H1 (cell line): ENCODE measurements at regions of chr14 and their contacts with region 1.

Region 1: GRCh38 chr14:93906341-93907329 is 20.5 kb upstream of the FAM181A start:
- DNase-seq: peak; percentile 47 to 87
- H3K4me3 ChIP-seq: no peak overlapping the region
- H3K27ac ChIP-seq: no peak overlapping the region
- H3K4me1 ChIP-seq: peaks cover 0 to 7% (median 3%) of the 10 kb centered on the region in 4 experiments; a peak in 4 of 7 replicates
- H3K27me3 ChIP-seq: no peaks in the 10 kb centered on the region; a peak in 1 of 7 replicates
- CTCF ChIP-seq: peak; percentile 75 to 93 (median 91)
- EP300 ChIP-seq: no peak
- POLR2A ChIP-seq: no peak
- RAD21 ChIP-seq: peak; percentile 90

Region 2: GRCh38 chr14:93648440-93649168 is 258.0 kb before region 1 on chr14:
- CTCF ChIA-PET with region 1: interaction called, 149 read pairs
- POLR2A ChIA-PET with region 1: no interaction called
- DNase-seq: no peak
- H3K4me3 ChIP-seq: no peak overlapping the region
- H3K27ac ChIP-seq: no peak overlapping the region
- H3K4me1 ChIP-seq: no peaks in the 10 kb centered on the region
- H3K27me3 ChIP-seq: no peaks in the 10 kb centered on the region
- CTCF ChIP-seq: peak; percentile 73 to 87 (median 80)
- EP300 ChIP-seq: no peak
- POLR2A ChIP-seq: no peak
- RAD21 ChIP-seq: peak; percentile 90 to 91

Region 3: DNA sequence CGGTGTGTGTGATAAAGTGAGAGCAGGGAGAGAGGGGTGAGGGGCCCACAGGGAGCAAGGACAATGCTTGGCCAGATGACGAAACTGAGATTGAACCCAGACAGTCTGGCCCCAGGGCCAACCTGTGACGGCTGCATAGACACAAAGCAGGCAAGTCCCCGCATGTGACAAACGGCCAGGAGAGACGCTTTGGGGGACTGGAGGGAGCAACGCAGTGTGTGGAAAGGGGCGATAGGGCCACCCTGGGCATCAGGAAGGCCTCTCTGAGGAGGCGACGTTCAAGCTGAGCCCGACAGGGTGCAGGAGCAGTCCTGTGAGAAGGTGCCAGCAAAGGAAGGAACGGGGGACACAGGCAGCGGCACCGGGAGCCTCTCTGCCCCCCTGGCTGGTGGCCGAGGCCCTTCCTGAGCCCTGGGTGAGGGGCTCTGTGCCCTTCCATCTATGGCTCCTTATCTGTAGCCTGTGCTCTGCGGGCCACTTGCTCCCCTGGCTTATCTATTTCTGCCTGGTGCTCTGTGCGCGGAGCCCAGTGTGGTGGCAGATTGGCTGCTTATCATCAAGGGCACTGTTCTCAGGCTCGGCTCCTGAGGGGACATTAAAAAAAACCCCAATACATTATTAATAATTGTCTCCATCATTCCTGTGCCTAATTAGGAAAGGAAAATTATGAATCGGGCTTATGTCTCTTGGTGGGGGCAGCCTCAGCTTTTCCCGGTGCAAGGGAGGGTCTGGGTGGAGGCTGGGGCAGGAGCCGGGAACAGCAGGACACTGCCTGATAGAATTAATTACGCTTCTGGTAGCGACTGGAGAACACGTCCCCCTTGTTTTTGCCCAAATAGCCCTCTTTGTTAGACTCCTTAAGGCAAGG is 158.2 kb before region 1 on chr14:
- CTCF ChIA-PET with region 1: no interaction called
- POLR2A ChIA-PET with region 1: no interaction called
- DNase-seq: no peak
- H3K4me3 ChIP-seq: no peak overlapping the region
- H3K27ac ChIP-seq: no peak overlapping the region
- H3K4me1 ChIP-seq: peaks cover 0 to 18% (median 6%) of the 10 kb centered on the region in 4 experiments; a peak in 4 of 7 replicates
- H3K27me3 ChIP-seq: no peaks in the 10 kb centered on the region
- CTCF ChIP-seq: no peak
- EP300 ChIP-seq: no peak
- POLR2A ChIP-seq: no peak
- RAD21 ChIP-seq: no peak

Region 4: GRCh38 chr14:93804646-93805045 is 102.0 kb before region 1 on chr14:
- CTCF ChIA-PET with region 1: interaction called, 35 read pairs
- POLR2A ChIA-PET with region 1: no interaction called
- DNase-seq: peak in 1 of 2 experiments; percentile 91
- H3K4me3 ChIP-seq: no peak overlapping the region
- H3K27ac ChIP-seq: no peak overlapping the region
- H3K4me1 ChIP-seq: no peaks in the 10 kb centered on the region
- H3K27me3 ChIP-seq: no peaks in the 10 kb centered on the region; a peak in 1 of 7 replicates
- CTCF ChIP-seq: peak; percentile 79 to 93 (median 92)
- EP300 ChIP-seq: no peak
- POLR2A ChIP-seq: no peak
- RAD21 ChIP-seq: peak; percentile 71 to 78

Region 5: GRCh38 chr14:93821051-93821450 is 85.6 kb before region 1 on chr14:
- CTCF ChIA-PET with region 1: interaction called, 13 read pairs
- POLR2A ChIA-PET with region 1: no interaction called
- DNase-seq: no peak
- H3K4me3 ChIP-seq: no peak overlapping the region
- H3K27ac ChIP-seq: no peak overlapping the region
- H3K4me1 ChIP-seq: no peaks in the 10 kb centered on the region
- H3K27me3 ChIP-seq: no peaks in the 10 kb centered on the region
- CTCF ChIP-seq: no peak
- EP300 ChIP-seq: no peak
- POLR2A ChIP-seq: no peak
- RAD21 ChIP-seq: no peak

Region 6: DNA sequence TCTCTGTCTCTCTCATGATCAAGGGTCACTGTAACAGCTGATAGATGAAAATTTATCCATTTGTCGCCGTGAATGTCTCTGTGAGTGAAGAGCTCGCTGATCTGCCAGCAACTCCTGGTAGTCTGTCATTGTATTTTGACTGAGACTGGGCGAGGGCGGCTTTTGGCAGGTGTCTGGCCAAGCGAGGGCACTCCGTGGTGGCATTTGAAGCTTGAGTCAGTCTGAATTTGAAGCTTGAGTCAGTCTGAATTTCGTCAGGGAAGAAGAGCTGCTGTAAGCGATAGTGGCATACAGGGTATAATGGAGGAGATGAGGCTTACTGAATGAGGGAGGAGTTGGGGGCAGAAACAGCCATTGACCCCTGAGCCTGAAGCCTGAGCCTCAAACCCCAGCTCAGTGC is 36.3 kb before region 1 on chr14:
- CTCF ChIA-PET with region 1: interaction called, 21 read pairs
- POLR2A ChIA-PET with region 1: no interaction called
- DNase-seq: no peak
- H3K4me3 ChIP-seq: no peak overlapping the region
- H3K27ac ChIP-seq: no peak overlapping the region
- H3K4me1 ChIP-seq: no peaks in the 10 kb centered on the region
- H3K27me3 ChIP-seq: peaks cover 0 to 2% (median 0%) of the 10 kb centered on the region in 4 experiments; a peak in 1 of 7 replicates
- CTCF ChIP-seq: no peak
- EP300 ChIP-seq: no peak
- POLR2A ChIP-seq: no peak
- RAD21 ChIP-seq: no peak

Region 7: GRCh38 chr14:93892923-93893558 is 13.6 kb before region 1 on chr14:
- CTCF ChIA-PET with region 1: interaction called, 29 read pairs
- POLR2A ChIA-PET with region 1: no interaction called
- DNase-seq: peak; percentile 46 to 98
- H3K4me3 ChIP-seq: peak overlapping the region in 1 of 4 experiments; percentile 10; a peak in 1 of 8 replicates
- H3K27ac ChIP-seq: no peak overlapping the region
- H3K4me1 ChIP-seq: peaks cover 4 to 20% (median 10%) of the 10 kb centered on the region in 4 experiments
- H3K27me3 ChIP-seq: no peaks in the 10 kb centered on the region; a peak in 1 of 7 replicates
- CTCF ChIP-seq: peak; percentile 88 to 96 (median 90)
- EP300 ChIP-seq: no peak
- POLR2A ChIP-seq: no peak
- RAD21 ChIP-seq: peak; percentile 71 to 82